H1 (cell line): ENCODE measurements at regions of chr18 and their contacts with region 1.

Region 1: GRCh38 chr18:46173393-46174341 is 69.5 kb downstream of the HAUS1 start:
- DNase-seq: peak; percentile 92 to 98
- H3K4me3 ChIP-seq: peak overlapping the region; percentile 71 to 91 (median 81)
- H3K27ac ChIP-seq: peak overlapping the region; percentile 88
- H3K4me1 ChIP-seq: peaks cover 0 to 2% (median 0%) of the 10 kb centered on the region in 4 experiments; a peak in 1 of 7 replicates
- H3K27me3 ChIP-seq: no peaks in the 10 kb centered on the region
- CTCF ChIP-seq: peak; percentile 91 to 94 (median 94)
- EP300 ChIP-seq: no peak
- POLR2A ChIP-seq: peak; percentile 40 to 61
- RAD21 ChIP-seq: peak; percentile 68 to 72

Region 2: DNA sequence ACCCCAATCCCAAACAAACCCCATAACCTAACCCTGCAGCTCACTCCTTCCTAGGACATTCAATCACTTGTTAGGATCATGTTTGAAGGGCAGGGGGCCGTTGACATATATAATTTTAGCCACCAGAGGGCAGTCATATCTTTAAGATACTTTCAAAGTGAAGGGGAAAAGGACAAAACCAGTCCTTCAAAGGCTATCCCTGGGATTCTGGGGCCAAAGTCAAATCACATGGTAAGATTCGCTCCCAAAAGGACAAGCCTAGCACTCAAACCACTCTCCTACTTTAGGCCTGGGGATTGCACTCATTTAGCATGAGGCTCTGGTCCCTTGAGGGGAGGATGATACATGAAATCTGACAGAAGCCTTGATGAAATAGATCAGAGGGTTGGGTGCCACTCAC is 24.9 kb before region 1 on chr18:
- CTCF ChIA-PET with region 1: interaction called, 114 read pairs
- POLR2A ChIA-PET with region 1: interaction called, 36 read pairs
- DNase-seq: peak; percentile 43 to 79
- H3K4me3 ChIP-seq: no peak overlapping the region
- H3K27ac ChIP-seq: no peak overlapping the region
- H3K4me1 ChIP-seq: peaks cover 10 to 17% (median 11%) of the 10 kb centered on the region in 4 experiments
- H3K27me3 ChIP-seq: no peaks in the 10 kb centered on the region
- CTCF ChIP-seq: peak in 2 of 3 experiments; percentile 57 to 73; a peak in 2 of 4 replicates
- EP300 ChIP-seq: no peak
- POLR2A ChIP-seq: no peak
- RAD21 ChIP-seq: peak; percentile 84

Region 3: DNA sequence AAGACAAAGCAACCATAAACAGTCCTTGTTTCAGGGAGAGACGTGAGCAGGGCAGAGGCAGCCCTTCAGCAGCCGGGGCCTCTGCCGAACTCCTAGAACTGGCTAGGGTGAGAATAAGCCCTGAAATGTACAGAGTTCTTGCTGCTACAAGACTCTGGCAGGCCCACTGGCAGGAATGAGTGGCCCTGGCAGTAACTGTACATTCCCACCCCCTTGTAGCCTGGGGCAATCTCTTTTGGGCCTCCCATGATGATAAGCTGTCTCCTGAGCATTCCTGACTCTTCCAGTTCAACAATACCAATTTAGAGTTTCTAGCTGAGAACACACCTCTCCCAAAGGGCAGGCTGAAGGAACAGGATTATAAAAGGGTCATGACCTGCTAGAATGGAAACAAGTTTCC is 15.2 kb before region 1 on chr18:
- CTCF ChIA-PET with region 1: interaction called, 114 read pairs
- POLR2A ChIA-PET with region 1: interaction called, 36 read pairs
- DNase-seq: no peak
- H3K4me3 ChIP-seq: no peak overlapping the region
- H3K27ac ChIP-seq: no peak overlapping the region
- H3K4me1 ChIP-seq: peaks cover 0 to 2% (median 1%) of the 10 kb centered on the region in 4 experiments; a peak in 4 of 7 replicates
- H3K27me3 ChIP-seq: no peaks in the 10 kb centered on the region
- CTCF ChIP-seq: no peak
- EP300 ChIP-seq: no peak
- POLR2A ChIP-seq: no peak
- RAD21 ChIP-seq: no peak

Region 4: DNA sequence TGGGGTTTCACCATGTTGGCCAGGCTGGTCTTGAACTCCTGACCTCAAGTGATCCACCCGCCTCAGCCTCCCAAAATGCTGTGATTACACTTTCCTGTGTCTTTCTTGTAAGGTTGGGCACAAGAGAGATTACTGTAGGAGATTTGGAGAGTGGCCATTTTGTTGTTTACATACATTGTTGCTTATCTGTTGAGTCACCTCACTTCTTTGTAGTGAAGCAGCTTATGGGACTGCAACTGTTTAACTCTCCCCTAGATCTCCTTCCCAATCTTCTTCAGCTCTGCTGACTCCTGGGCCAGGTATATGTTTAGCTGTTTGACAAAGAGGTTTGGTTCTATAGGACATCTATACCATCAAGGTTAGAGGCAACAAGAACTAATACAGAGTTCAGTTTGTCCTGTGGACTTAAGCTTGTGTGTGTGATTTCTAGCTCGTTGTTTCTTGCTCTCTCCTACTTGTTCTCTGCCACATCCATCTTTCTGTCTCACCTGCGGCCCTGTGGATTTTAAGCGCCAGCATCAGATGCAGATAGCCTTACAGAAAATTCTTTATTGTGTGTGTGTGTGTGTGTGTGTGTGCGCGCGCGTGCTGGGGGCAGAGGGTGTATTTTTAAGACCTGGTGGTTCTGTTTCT is 26.0 kb after region 1 on chr18:
- CTCF ChIA-PET with region 1: interaction called, 25 read pairs
- POLR2A ChIA-PET with region 1: interaction called, 7 read pairs
- DNase-seq: no peak
- H3K4me3 ChIP-seq: no peak overlapping the region
- H3K27ac ChIP-seq: 0 out of 2 replicates have a peak overlapping the region, but pooled peaks have one; percentile 47
- H3K4me1 ChIP-seq: no peaks in the 10 kb centered on the region; a peak in 1 of 7 replicates
- H3K27me3 ChIP-seq: no peaks in the 10 kb centered on the region
- CTCF ChIP-seq: no peak
- EP300 ChIP-seq: no peak
- POLR2A ChIP-seq: no peak
- RAD21 ChIP-seq: no peak

Region 5: GRCh38 chr18:46213295-46213694 is 39.6 kb after region 1 on chr18:
- CTCF ChIA-PET with region 1: interaction called, 27 read pairs
- POLR2A ChIA-PET with region 1: interaction called, 3 read pairs
- DNase-seq: no peak
- H3K4me3 ChIP-seq: no peak overlapping the region
- H3K27ac ChIP-seq: no peak overlapping the region
- H3K4me1 ChIP-seq: no peaks in the 10 kb centered on the region
- H3K27me3 ChIP-seq: no peaks in the 10 kb centered on the region
- CTCF ChIP-seq: peak in 2 of 3 experiments; percentile 17 to 42; a peak in 2 of 4 replicates
- EP300 ChIP-seq: no peak
- POLR2A ChIP-seq: no peak
- RAD21 ChIP-seq: peak; percentile 34 to 42; a peak in 3 of 4 replicates

Region 6: GRCh38 chr18:46220116-46220515 is 46.4 kb after region 1 on chr18:
- CTCF ChIA-PET with region 1: interaction called, 12 read pairs
- POLR2A ChIA-PET with region 1: interaction called, 4 read pairs
- DNase-seq: no peak
- H3K4me3 ChIP-seq: no peak overlapping the region
- H3K27ac ChIP-seq: no peak overlapping the region
- H3K4me1 ChIP-seq: no peaks in the 10 kb centered on the region; a peak in 1 of 7 replicates
- H3K27me3 ChIP-seq: no peaks in the 10 kb centered on the region
- CTCF ChIP-seq: no peak
- EP300 ChIP-seq: no peak
- POLR2A ChIP-seq: no peak
- RAD21 ChIP-seq: no peak

Region 7: DNA sequence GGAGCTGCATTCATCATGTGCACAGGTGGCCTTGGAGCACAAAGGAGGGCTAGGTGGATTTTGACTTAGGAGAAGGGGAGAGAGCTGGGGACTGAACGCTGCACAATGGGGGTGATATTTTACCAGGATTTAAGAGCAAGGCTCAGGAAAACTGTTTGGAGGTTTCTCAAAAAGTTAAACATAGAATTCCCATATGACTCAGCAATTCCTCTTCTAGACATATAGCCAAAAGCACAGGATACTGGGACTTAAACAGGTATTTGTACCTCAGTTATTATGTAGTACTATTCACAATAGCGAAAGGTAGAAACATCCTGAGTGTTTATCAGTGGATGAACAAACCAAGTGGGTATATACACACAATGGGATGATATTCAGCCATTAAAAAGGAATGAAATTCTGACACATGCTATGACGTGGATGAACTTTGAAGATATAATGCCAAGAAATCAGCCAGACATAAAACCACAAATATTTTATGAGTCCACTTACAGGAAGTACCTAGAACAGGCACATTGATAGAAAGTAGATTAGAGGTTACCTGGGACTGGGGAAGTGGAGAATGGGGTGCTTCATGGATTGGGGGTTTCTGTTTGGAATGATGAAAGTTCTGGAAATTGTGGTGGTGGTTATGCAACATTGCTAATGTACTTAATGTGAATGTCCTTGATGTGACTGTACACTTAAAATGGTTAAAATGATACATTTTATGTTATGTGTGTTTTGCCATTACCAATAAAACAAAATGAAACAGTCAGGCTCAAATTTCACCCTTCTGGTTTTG is 147.5 kb after region 1 on chr18:
- CTCF ChIA-PET with region 1: no interaction called
- POLR2A ChIA-PET with region 1: no interaction called
- DNase-seq: no peak
- H3K4me3 ChIP-seq: no peak overlapping the region
- H3K27ac ChIP-seq: no peak overlapping the region
- H3K4me1 ChIP-seq: peaks cover 6 to 21% (median 18%) of the 10 kb centered on the region in 4 experiments
- H3K27me3 ChIP-seq: no peaks in the 10 kb centered on the region
- CTCF ChIP-seq: no peak
- EP300 ChIP-seq: no peak
- POLR2A ChIP-seq: no peak
- RAD21 ChIP-seq: no peak

Region 8: GRCh38 chr18:46591783-46592399 is 418.2 kb after region 1 on chr18:
- CTCF ChIA-PET with region 1: no interaction called
- POLR2A ChIA-PET with region 1: no interaction called
- DNase-seq: no peak
- H3K4me3 ChIP-seq: no peak overlapping the region
- H3K27ac ChIP-seq: no peak overlapping the region
- H3K4me1 ChIP-seq: no peaks in the 10 kb centered on the region
- H3K27me3 ChIP-seq: no peaks in the 10 kb centered on the region
- CTCF ChIP-seq: no peak
- EP300 ChIP-seq: no peak
- POLR2A ChIP-seq: no peak
- RAD21 ChIP-seq: no peak